Activated B cell treated with CpG ODN at 0.5 μM for 24 hours (primary cell): ENCODE measurements at regions of chr10 and their contacts with region 1.

Region 1: GRCh38 chr10:80144067-80144695 is 11.7 kb downstream of the PLAC9 start:
- DNase-seq: peak; percentile 41
- ATAC-seq: peak; percentile 76
- H3K4me3 Mint-ChIP-seq: peak overlapping the region; percentile 69
- H3K27ac Mint-ChIP-seq: peak overlapping the region; percentile 53
- H3K4me1 Mint-ChIP-seq: peaks cover 25% of the 10 kb centered on the region
- H3K27me3 Mint-ChIP-seq: peaks cover 13% of the 10 kb centered on the region
- CTCF ChIP-seq: no peak

Region 2: DNA sequence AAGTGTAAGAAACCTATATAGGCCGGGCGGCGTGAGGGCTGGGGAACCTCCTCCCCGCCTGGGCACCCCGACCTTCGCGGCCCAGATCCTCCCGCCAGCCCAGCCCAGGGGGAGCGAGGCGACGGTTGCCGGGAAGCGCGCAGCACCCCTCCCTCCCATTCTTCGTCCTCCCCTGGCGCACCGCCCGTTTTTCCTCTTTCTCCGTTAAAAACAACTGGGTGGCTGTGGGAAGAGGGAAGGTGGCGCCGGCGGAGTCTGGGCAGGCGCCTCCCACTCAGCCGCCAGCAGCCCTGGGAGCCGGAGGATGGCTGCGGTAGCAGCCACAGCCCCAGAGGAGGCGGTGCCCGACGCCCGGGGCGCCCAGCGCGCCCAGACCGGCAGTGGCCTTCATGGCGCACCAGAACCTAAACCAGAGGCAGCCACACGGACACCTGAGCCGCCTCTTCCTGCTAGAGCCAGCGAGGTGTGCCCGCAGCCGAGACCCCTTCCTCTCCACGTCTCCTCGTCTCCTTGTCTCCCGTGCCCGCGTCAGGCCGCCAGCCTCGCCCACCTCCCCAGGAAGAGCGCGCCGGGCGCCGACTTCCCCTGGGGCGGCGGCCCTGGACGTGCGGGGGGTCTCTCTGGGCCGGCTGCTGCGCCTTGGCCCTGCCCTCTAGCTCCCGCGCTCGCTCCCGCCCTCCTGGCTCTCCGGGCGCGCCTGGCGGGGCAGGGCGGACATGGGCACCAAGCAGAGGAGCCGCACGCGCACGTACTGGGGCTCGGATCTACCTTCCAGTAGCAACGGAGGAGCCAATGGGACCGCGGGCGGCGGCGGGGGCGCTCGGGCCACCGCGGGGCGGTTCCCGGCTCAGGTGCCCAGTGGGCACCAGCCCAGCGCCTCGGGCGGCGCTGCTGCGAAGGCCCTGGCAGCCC is 162.5 kb before region 1 on chr10:
- CTCF ChIA-PET with region 1: no interaction called
- POLR2A ChIA-PET with region 1: no interaction called
- intact Hi-C with region 1: no loop called
- DNase-seq: peak; percentile 20
- ATAC-seq: peak; percentile 28
- H3K4me3 Mint-ChIP-seq: peak overlapping the region; percentile 64
- H3K27ac Mint-ChIP-seq: no peak overlapping the region
- H3K4me1 Mint-ChIP-seq: peaks cover 11% of the 10 kb centered on the region
- H3K27me3 Mint-ChIP-seq: peaks cover 60% of the 10 kb centered on the region
- CTCF ChIP-seq: no peak

Region 3: GRCh38 chr10:80161331-80162083 is 17.3 kb after region 1 on chr10:
- CTCF ChIA-PET with region 1: interaction called, 3 read pairs
- POLR2A ChIA-PET with region 1: no interaction called
- intact Hi-C with region 1: loop called (anchors 2 kb)
- DNase-seq: no peak
- ATAC-seq: no peak
- H3K4me3 Mint-ChIP-seq: no peak overlapping the region
- H3K27ac Mint-ChIP-seq: no peak overlapping the region
- H3K4me1 Mint-ChIP-seq: peaks cover 9% of the 10 kb centered on the region
- H3K27me3 Mint-ChIP-seq: no peaks in the 10 kb centered on the region
- CTCF ChIP-seq: no peak

Region 4: GRCh38 chr10:80187465-80188409 is 43.6 kb after region 1 on chr10:
- CTCF ChIA-PET with region 1: interaction called, 11 read pairs
- POLR2A ChIA-PET with region 1: interaction called, 9 read pairs
- intact Hi-C with region 1: no loop called
- DNase-seq: peak; percentile 57
- ATAC-seq: peak; percentile 91
- H3K4me3 Mint-ChIP-seq: peak overlapping the region; percentile 68
- H3K27ac Mint-ChIP-seq: peak overlapping the region; percentile 91
- H3K4me1 Mint-ChIP-seq: peaks cover 82% of the 10 kb centered on the region
- H3K27me3 Mint-ChIP-seq: no peaks in the 10 kb centered on the region
- CTCF ChIP-seq: no peak

Region 5: DNA sequence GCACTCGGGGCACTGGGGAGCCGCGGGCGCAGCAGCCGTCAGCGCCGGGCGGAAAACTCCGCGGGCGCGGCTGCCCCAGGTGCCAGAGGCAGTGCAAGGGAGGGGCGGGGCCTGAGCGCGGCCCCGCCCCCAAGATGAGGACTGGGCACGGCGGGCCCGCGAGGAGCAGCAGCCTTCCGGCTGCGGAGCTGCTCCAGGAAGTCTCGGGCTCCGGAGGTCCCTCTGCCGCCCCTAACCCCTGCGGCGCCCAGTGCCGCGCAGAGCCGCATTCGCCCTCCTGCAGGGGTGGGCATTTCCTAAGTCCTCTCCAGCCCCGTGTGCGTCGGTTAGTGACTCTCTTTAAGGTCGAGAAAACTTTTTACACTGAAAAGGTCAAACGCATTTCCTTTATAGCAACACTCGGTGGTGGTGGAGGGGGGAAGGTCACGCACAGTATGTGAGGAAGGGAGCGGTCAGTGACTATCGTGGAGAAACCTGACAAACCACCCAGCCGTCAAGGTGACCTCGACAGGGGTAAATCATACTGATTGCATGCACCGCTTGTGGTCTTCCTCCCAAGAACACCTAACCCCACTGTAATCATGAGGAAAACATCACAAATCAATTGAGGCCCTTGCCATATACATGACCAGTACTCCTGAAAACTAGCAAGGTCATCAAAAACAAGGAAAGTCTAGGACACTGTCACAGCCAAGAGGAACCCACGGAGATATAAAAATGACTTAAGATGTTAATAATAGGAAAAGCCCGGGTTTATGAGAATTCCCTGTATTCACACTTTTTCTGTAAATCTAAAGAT is 61.5 kb after region 1 on chr10 and contains the start of gene ANXA11:
- CTCF ChIA-PET with region 1: interaction called, 11 read pairs
- POLR2A ChIA-PET with region 1: interaction called, 9 read pairs
- intact Hi-C with region 1: loop called (anchors 1 kb)
- DNase-seq: peak; percentile 80
- ATAC-seq: peak; percentile 84
- H3K4me3 Mint-ChIP-seq: peak within 1 kb of the TSS; percentile 83
- H3K27ac Mint-ChIP-seq: peak within 1 kb of the TSS; percentile 92
- H3K4me1 Mint-ChIP-seq: peaks cover 51% of the 10 kb centered on the region
- H3K27me3 Mint-ChIP-seq: no peaks in the 10 kb centered on the region
- CTCF ChIP-seq: no peak
- total RNA-seq, gene ANXA11: 178 and 190 TPM in 2 replicates

Region 6: DNA sequence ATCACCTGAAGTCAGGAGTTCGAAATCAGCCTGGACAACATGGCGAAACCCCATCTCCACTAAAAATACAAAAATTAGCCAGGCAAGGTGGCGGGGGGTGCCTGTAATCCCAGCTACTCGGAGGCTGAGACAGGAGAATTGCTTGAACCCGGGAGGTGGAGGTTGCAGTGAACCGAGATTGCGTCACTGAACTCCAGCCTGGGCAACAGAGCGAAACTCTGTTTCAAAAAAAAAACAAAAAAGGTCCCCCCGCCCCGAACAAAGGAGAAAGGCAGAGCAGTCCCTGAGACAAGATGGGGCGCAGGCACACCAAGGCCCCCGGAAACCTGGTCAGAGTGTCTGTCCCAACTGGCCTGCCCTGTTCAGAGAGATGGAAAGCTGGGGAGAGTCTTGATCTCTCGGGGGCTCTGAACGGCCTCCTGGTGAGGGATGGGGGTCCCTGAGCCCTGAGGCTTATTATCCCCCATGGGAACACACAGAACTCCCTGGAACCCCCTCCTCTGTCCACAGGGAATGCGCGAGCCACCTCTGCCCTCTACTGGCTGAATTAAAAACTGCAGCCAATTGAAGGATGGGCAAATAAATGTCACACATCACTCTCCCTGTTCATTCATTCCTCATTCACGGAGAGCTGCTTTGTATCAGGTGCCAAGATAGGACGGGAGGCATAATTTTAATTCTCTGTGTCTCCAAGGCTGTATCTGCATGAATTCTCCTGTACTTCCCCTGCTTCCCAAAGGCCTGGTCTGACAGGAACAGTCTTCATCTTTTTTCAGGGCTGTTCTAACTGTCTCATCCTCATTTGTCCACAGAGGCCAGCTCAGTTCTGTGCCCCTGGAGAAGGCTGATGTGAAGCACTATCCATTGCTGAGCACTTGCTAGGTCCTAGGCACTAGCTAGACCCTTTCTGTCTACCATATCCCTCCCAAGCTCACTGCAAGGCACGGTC is 116.4 kb after region 1 on chr10:
- CTCF ChIA-PET with region 1: interaction called, 10 read pairs
- POLR2A ChIA-PET with region 1: no interaction called
- intact Hi-C with region 1: no loop called
- DNase-seq: no peak
- ATAC-seq: peak; percentile 54
- H3K4me3 Mint-ChIP-seq: no peak overlapping the region
- H3K27ac Mint-ChIP-seq: no peak overlapping the region
- H3K4me1 Mint-ChIP-seq: no peaks in the 10 kb centered on the region
- H3K27me3 Mint-ChIP-seq: peaks cover 2% of the 10 kb centered on the region
- CTCF ChIP-seq: no peak

Region 7: DNA sequence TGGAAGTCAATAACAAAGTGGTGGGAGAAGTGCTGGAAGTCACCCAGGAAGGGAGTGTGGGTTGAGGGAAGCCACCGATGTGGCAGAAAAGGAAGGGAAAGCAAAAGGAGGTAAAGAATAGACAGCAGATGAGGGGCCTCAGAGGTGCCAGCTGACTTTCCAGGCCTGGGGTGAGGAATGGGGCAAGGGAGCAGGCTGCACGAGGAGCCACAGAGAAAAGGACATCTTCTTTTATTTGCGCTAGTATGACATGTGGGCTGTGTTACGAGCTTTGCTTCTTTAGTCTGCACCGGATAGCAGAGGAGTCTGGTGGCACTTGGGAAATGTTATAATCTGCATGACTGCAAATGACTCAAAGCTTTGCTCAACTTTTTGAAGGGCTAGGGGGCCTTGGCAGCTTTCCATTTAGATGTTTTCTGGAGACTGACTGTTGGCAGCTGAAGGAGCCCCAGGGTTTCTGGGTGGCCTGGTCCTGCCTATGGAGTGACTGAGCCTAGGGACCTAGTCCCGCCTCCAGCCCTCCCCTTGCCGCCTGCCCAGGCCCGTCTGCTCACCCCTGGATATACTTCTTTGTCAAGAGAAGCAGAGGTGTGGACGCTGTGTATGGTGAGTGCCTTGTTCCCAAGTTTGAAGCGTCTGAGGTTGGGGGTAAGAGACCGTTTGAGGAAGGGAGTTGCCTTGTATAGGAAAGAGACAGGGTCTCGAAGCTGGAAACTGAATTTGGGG is 269.3 kb after region 1 on chr10:
- CTCF ChIA-PET with region 1: no interaction called
- POLR2A ChIA-PET with region 1: no interaction called
- intact Hi-C with region 1: no loop called
- DNase-seq: no peak
- ATAC-seq: no peak
- H3K4me3 Mint-ChIP-seq: no peak overlapping the region
- H3K27ac Mint-ChIP-seq: no peak overlapping the region
- H3K4me1 Mint-ChIP-seq: peaks cover 5% of the 10 kb centered on the region
- H3K27me3 Mint-ChIP-seq: no peaks in the 10 kb centered on the region
- CTCF ChIP-seq: no peak